Mammary epithelial cell (primary cell): ENCODE measurements at regions of chr2 and their contacts with region 1.

Region 1: GRCh38 chr2:134178241-134178877 is 75.5 kb upstream of the MGAT5 start:
- DNase-seq: peak; percentile 26
- H3K4me3 ChIP-seq: no peak overlapping the region
- H3K27ac ChIP-seq: peak overlapping the region; percentile 44
- H3K4me1 ChIP-seq: peaks cover 34% of the 10 kb centered on the region
- H3K27me3 ChIP-seq: no peaks in the 10 kb centered on the region
- CTCF ChIP-seq: no peak

Region 2: DNA sequence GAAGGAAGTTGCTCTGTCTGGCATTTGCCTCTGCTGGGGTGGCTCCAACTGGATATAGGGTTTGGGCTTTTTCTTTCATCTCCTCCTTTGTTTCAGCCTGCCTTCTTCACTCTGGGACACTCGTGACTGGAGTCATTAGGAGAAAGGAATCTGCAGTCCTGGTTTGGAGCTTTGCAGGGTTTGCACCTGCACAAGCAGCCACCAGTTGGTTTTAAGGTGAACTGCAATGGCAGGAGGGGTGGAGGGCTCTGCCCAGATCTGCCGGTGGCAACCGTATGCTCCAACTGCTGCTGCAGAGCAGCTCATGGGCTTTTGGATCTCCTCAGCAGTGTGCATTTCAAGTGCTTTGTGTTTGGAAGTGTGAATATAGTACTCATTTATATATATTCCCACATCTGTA is 55.7 kb before region 1 on chr2:
- CTCF ChIA-PET with region 1: no interaction called
- dilution Hi-C with region 1: no loop called
- in situ Hi-C with region 1: no loop called
- intact Hi-C with region 1: no loop called
- DNase-seq: no peak
- H3K4me3 ChIP-seq: no peak overlapping the region
- H3K27ac ChIP-seq: no peak overlapping the region
- H3K4me1 ChIP-seq: peaks cover 18% of the 10 kb centered on the region
- H3K27me3 ChIP-seq: no peaks in the 10 kb centered on the region
- CTCF ChIP-seq: peak; percentile 10 to 28

Region 3: GRCh38 chr2:134137182-134137611 is 41.2 kb before region 1 on chr2:
- CTCF ChIA-PET with region 1: no interaction called
- dilution Hi-C with region 1: no loop called
- in situ Hi-C with region 1: no loop called
- intact Hi-C with region 1: loop called (anchors 1 kb)
- DNase-seq: no peak
- H3K4me3 ChIP-seq: peak overlapping the region in 1 of 3 experiments; percentile 2
- H3K27ac ChIP-seq: peak overlapping the region; percentile 91
- H3K4me1 ChIP-seq: peaks cover 47% of the 10 kb centered on the region
- H3K27me3 ChIP-seq: no peaks in the 10 kb centered on the region
- CTCF ChIP-seq: no peak

Region 4: GRCh38 chr2:134189009-134189720 is 10.8 kb after region 1 on chr2:
- CTCF ChIA-PET with region 1: interaction called, 4 read pairs
- dilution Hi-C with region 1: no loop called
- in situ Hi-C with region 1: no loop called
- intact Hi-C with region 1: loop called (anchors 1 kb)
- DNase-seq: peak; percentile 96
- H3K4me3 ChIP-seq: no peak overlapping the region
- H3K27ac ChIP-seq: peak overlapping the region; percentile 91
- H3K4me1 ChIP-seq: peaks cover 16% of the 10 kb centered on the region
- H3K27me3 ChIP-seq: no peaks in the 10 kb centered on the region
- CTCF ChIP-seq: no peak

Region 5: GRCh38 chr2:134512734-134513464 is 334.5 kb after region 1 on chr2:
- CTCF ChIA-PET with region 1: no interaction called
- dilution Hi-C with region 1: no loop called
- in situ Hi-C with region 1: no loop called
- intact Hi-C with region 1: no loop called
- DNase-seq: peak; percentile 68
- H3K4me3 ChIP-seq: no peak overlapping the region
- H3K27ac ChIP-seq: no peak overlapping the region
- H3K4me1 ChIP-seq: peaks cover 11% of the 10 kb centered on the region
- H3K27me3 ChIP-seq: no peaks in the 10 kb centered on the region
- CTCF ChIP-seq: no peak